Caco-2 (cell line): ENCODE measurements at regions of chr2 and their contacts with region 1.

Region 1: DNA sequence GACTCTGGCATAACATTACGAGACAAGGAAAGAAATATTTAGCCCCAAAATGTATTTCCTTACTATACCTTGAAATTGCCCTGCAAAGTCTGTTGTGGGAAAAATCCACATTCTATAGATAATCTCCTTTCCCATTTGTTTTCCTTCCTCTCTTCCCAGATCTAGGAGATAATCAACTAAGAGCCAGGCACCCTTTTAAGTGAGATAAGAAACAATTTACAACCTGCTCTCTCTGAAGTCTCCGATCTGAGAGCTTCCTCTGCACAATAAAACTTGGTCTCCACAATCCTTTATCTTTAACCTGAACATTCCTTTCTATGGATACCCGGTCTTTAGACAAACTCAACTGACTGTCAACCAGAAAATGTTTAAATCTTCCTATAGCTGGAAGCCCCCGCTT is 1160.7 kb upstream of the NRXN1 start:
- DNase-seq: peak; percentile 49 to 68
- H3K4me3 ChIP-seq: no peak overlapping the region
- H3K4me3 Mint-ChIP-seq: peak overlapping the region; percentile 9
- H3K27ac Mint-ChIP-seq: peak overlapping the region; percentile 18
- H3K4me1 ChIP-seq: peaks cover 30% of the 10 kb centered on the region
- H3K4me1 Mint-ChIP-seq: peaks cover 23% of the 10 kb centered on the region
- H3K27me3 ChIP-seq: no peaks in the 10 kb centered on the region
- H3K27me3 Mint-ChIP-seq: no peaks in the 10 kb centered on the region
- CTCF ChIP-seq: no peak

Region 2: GRCh38 chr2:52034706-52035105 is 157.9 kb before region 1 on chr2:
- CTCF ChIA-PET with region 1: no interaction called
- POLR2A ChIA-PET with region 1: no interaction called
- intact Hi-C with region 1: loop called (anchors 2 kb)
- DNase-seq: no peak
- H3K4me3 ChIP-seq: no peak overlapping the region
- H3K4me3 Mint-ChIP-seq: no peak overlapping the region
- H3K27ac Mint-ChIP-seq: no peak overlapping the region
- H3K4me1 ChIP-seq: peaks cover 17% of the 10 kb centered on the region
- H3K4me1 Mint-ChIP-seq: peaks cover 16% of the 10 kb centered on the region
- H3K27me3 ChIP-seq: no peaks in the 10 kb centered on the region
- H3K27me3 Mint-ChIP-seq: no peaks in the 10 kb centered on the region
- CTCF ChIP-seq: no peak

Region 3: DNA sequence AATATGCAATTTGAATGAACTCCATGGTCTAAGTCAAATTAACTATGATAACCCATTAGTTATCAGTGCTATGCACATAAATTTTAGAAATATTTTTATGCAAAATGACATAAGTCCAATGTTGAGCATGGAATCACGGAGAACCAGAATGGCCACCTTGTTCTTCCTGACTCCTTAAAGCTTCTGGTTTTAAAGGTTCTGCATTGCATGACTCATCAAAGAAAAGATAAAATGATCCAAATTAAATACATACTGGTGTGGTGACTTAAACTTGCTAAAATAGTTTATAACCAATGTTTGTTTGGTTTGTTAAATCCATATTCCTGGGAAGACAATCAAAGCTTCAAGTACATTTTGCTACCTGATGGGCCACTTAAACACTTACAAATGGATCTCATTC is 13.8 kb before region 1 on chr2:
- CTCF ChIA-PET with region 1: no interaction called
- POLR2A ChIA-PET with region 1: no interaction called
- intact Hi-C with region 1: no loop called
- DNase-seq: no peak
- H3K4me3 ChIP-seq: no peak overlapping the region
- H3K4me3 Mint-ChIP-seq: no peak overlapping the region
- H3K27ac Mint-ChIP-seq: no peak overlapping the region
- H3K4me1 ChIP-seq: no peaks in the 10 kb centered on the region
- H3K4me1 Mint-ChIP-seq: no peaks in the 10 kb centered on the region
- H3K27me3 ChIP-seq: no peaks in the 10 kb centered on the region
- H3K27me3 Mint-ChIP-seq: no peaks in the 10 kb centered on the region
- CTCF ChIP-seq: no peak

Region 4: DNA sequence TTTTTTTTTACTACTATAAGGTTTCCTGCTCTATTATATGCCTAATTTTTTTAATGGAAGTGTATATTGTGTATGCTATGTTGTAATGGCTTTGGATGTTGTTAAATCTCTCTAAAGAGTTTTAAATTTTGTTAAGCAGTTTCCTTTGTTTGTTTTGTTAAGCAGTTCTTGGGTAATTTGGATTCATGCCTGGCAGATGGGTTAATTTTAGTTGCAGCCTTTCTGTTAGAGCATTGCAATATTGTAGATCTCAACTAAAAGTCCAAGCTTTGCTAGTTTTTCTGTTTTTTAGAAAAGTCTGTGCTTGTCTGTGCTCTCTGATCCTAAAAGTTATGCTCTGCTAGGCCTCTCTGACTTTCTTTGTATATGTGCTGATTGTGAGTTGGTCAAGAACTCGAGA is 68.2 kb after region 1 on chr2:
- CTCF ChIA-PET with region 1: no interaction called
- POLR2A ChIA-PET with region 1: no interaction called
- intact Hi-C with region 1: loop called (anchors 2 kb)
- DNase-seq: no peak
- H3K4me3 ChIP-seq: no peak overlapping the region
- H3K4me3 Mint-ChIP-seq: no peak overlapping the region
- H3K27ac Mint-ChIP-seq: no peak overlapping the region
- H3K4me1 ChIP-seq: no peaks in the 10 kb centered on the region
- H3K4me1 Mint-ChIP-seq: no peaks in the 10 kb centered on the region
- H3K27me3 ChIP-seq: no peaks in the 10 kb centered on the region
- H3K27me3 Mint-ChIP-seq: no peaks in the 10 kb centered on the region
- CTCF ChIP-seq: no peak

Region 5: GRCh38 chr2:52391621-52392020 is 199.0 kb after region 1 on chr2:
- CTCF ChIA-PET with region 1: no interaction called
- POLR2A ChIA-PET with region 1: no interaction called
- intact Hi-C with region 1: no loop called
- DNase-seq: no peak
- H3K4me3 ChIP-seq: no peak overlapping the region
- H3K4me3 Mint-ChIP-seq: no peak overlapping the region
- H3K27ac Mint-ChIP-seq: no peak overlapping the region
- H3K4me1 ChIP-seq: no peaks in the 10 kb centered on the region
- H3K4me1 Mint-ChIP-seq: no peaks in the 10 kb centered on the region
- H3K27me3 ChIP-seq: no peaks in the 10 kb centered on the region
- H3K27me3 Mint-ChIP-seq: no peaks in the 10 kb centered on the region
- CTCF ChIP-seq: no peak